Testis (tissue), 5 donors: ENCODE measurements at regions of chr9 and their contacts with region 1.

Region 1: GRCh38 chr9:128921881-128922763 is 1.3 kb downstream of the PHYHD1 start:
- DNase-seq: peak; percentile 60
- H3K4me3 ChIP-seq: peak overlapping the region; percentile 58 to 63
- H3K27ac ChIP-seq: peak overlapping the region; percentile 76 to 94
- H3K4me1 ChIP-seq: peaks cover 28% of the 10 kb centered on the region
- H3K27me3 ChIP-seq: no peaks in the 10 kb centered on the region
- CTCF ChIP-seq: no peak
- POLR2A ChIP-seq: no peak

Region 2: DNA sequence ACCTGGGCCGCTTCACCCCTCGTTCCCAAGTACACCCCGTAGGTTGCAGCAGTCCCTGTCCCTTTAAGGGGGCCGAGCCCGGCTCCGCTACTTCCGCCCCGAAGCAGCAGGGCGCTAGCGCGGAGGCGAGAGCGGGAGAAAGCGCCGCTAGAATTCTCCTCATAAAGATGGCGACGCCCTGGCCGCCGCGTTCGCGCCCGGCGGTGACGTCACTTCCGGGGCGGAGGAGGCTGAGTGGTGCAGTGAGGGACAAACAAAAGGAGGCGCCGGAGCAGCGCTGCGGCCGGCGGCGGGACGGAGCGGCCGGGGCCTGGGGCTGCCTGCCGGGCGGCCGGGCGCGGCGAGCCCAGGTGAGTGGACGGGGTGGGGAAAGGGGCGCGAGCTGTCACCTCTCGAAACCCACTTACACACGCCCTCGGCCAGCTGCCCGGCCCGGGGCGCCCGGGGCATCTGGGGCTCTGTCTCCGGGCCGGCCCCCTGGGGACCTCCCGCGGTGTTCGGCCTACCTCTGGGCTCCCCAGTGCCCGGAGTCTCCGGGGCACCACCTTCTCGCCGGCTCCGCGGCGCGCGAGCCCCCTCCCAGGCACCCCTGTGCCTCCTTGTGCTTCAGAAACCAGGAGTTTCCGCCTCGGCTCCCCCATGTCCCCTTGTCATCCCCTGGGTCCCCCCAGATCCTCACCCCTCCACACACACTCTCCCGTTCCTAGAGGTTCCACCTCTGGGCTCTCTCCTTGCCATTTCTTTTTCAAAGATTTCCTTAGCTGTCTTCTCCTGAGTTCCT is 40.0 kb before region 1 on chr9 and contains the starts of genes KYAT1 and LRRC8A:
- intact Hi-C with region 1: loop called (anchors 5 kb)
- DNase-seq: peak; percentile 98
- H3K4me3 ChIP-seq: peak within 1 kb of the TSS; percentile 88 to 98
- H3K27ac ChIP-seq: peak within 1 kb of the TSS; percentile 90 to 98
- H3K4me1 ChIP-seq: peaks cover 28% of the 10 kb centered on the region
- H3K27me3 ChIP-seq: no peaks in the 10 kb centered on the region
- CTCF ChIP-seq: peak in 2 of 3 experiments; percentile 17 to 41
- POLR2A ChIP-seq: no peak
- total RNA-seq, gene KYAT1: 14.0 to 18.0 TPM
- total RNA-seq, gene LRRC8A: 54.3 to 61.3 TPM